Activated CD4-positive, alpha-beta memory T cell treated with anti-CD3 and anti-CD28 coated beads for 36 hours (primary cell): ENCODE measurements at regions of chr4 and their contacts with region 1.

Region 1: DNA sequence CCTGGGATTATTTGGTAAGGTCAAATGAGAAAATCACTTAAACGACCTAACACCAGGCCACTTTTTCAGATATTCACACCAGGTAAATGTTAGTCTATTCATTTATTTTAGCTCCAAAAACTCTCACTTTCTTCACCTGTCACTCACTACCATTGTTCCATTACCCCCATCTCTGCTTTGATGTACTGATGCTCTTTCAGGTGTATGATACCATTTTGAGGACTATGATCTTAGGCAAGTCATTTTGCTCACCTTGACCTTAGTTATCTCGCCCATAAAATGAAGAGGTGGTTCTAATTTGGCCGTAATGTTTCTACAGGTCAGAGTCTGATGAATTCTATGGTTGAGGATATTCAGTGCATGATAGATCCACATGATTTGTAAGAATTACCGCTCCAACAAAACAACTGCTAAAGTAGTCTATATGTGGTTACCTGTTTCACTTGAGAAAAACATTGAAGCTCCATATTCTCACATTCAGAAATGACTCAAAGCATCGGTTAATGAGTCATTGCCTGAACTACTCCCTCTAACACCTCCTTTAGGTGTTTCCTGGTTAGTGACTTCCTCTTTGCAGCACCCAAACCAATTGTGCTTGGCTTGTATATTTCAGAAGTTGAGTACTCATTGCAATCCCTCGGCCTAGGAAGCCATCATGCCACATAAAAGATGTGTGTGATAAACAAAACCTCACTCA is 4.5 kb downstream of the DTHD1 start:
- DNase-seq: peak; percentile 75
- H3K4me3 Mint-ChIP-seq: peak overlapping the region; percentile 53
- H3K27ac Mint-ChIP-seq: peak overlapping the region; percentile 87
- H3K4me1 Mint-ChIP-seq: peaks cover 60% of the 10 kb centered on the region
- H3K27me3 Mint-ChIP-seq: no peaks in the 10 kb centered on the region

Region 2: GRCh38 chr4:36208893-36209473 is 76.9 kb before region 1 on chr4:
- CTCF ChIA-PET with region 1: no interaction called
- POLR2A ChIA-PET with region 1: interaction called, 5 read pairs
- intact Hi-C with region 1: loop called (anchors 1 kb)
- DNase-seq: peak; percentile 54
- H3K4me3 Mint-ChIP-seq: no peak overlapping the region
- H3K27ac Mint-ChIP-seq: peak overlapping the region; percentile 73
- H3K4me1 Mint-ChIP-seq: peaks cover 52% of the 10 kb centered on the region
- H3K27me3 Mint-ChIP-seq: no peaks in the 10 kb centered on the region

Region 3: DNA sequence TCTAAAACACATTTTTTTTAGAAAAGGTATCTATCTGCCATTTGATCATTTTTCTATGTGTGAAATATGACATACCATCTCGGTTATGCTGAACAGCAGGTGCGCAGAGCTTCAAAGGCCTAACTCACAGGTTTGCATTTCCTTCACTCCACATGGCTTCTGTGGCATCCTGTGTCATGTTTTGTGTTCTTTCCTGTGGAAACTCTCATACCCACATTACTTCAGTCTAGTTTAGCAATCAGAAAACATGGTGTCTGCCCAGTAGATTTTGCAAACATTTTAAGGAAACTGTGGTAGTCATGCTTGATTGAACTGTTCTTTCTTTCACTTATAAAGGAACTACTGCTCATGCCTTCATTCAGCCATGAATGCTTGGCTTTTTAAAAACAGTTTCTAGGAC is 30.4 kb before region 1 on chr4:
- CTCF ChIA-PET with region 1: interaction called, 3 read pairs
- POLR2A ChIA-PET with region 1: interaction called, 13 read pairs
- intact Hi-C with region 1: loop called (anchors 1 kb)
- DNase-seq: peak; percentile 75
- H3K4me3 Mint-ChIP-seq: peak overlapping the region; percentile 65
- H3K27ac Mint-ChIP-seq: peak overlapping the region; percentile 95
- H3K4me1 Mint-ChIP-seq: peaks cover 44% of the 10 kb centered on the region
- H3K27me3 Mint-ChIP-seq: no peaks in the 10 kb centered on the region

Region 4: GRCh38 chr4:36269101-36269500 is 16.8 kb before region 1 on chr4:
- CTCF ChIA-PET with region 1: interaction called, 6 read pairs
- POLR2A ChIA-PET with region 1: interaction called, 6 read pairs
- intact Hi-C with region 1: loop called (anchors 1 kb)
- DNase-seq: peak; percentile 56
- H3K4me3 Mint-ChIP-seq: no peak overlapping the region
- H3K27ac Mint-ChIP-seq: peak overlapping the region; percentile 53
- H3K4me1 Mint-ChIP-seq: peaks cover 48% of the 10 kb centered on the region
- H3K27me3 Mint-ChIP-seq: no peaks in the 10 kb centered on the region

Region 5: DNA sequence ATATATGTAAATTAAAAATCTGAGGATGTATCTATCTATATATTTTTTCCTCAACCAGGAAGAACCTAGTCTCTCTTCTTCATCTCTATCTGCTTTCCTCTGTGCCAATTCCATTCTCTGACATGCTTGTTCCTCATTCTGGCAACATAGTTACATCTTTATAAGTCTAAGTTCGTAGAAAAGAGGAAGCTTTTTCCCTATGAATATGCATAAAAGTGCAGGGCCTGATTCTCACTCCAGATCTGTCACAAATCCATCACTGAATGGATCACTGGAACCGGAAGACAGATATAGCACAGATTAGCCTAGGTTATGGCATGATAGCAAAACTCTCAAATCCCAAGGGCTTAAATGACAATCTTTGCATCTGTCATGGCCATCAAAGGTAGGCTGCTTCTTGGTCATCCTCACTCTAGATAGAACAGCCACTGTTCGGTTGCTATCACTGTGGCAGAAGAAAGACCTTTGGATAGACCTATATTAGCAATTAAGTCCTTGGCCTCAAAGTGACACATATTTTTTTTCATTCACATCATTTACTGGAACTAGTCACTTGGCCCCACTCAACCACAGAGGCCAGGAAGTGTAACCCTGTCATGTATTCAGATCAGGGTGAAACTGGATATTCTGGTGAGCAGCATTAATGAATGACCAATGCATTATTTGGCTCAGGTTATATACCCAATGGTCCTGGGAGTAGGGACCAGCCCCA is 17.6 kb after region 1 on chr4:
- CTCF ChIA-PET with region 1: no interaction called
- POLR2A ChIA-PET with region 1: no interaction called
- intact Hi-C with region 1: loop called (anchors 1 kb)
- DNase-seq: peak; percentile 33
- H3K4me3 Mint-ChIP-seq: no peak overlapping the region
- H3K27ac Mint-ChIP-seq: no peak overlapping the region
- H3K4me1 Mint-ChIP-seq: peaks cover 16% of the 10 kb centered on the region
- H3K27me3 Mint-ChIP-seq: peaks cover 1% of the 10 kb centered on the region

Region 6: GRCh38 chr4:36320117-36320896 is 34.4 kb after region 1 on chr4:
- CTCF ChIA-PET with region 1: interaction called, 7 read pairs
- POLR2A ChIA-PET with region 1: interaction called, 13 read pairs
- intact Hi-C with region 1: loop called (anchors 1 kb)
- DNase-seq: no peak
- H3K4me3 Mint-ChIP-seq: no peak overlapping the region
- H3K27ac Mint-ChIP-seq: peak overlapping the region; percentile 67
- H3K4me1 Mint-ChIP-seq: peaks cover 79% of the 10 kb centered on the region
- H3K27me3 Mint-ChIP-seq: no peaks in the 10 kb centered on the region

Region 7: DNA sequence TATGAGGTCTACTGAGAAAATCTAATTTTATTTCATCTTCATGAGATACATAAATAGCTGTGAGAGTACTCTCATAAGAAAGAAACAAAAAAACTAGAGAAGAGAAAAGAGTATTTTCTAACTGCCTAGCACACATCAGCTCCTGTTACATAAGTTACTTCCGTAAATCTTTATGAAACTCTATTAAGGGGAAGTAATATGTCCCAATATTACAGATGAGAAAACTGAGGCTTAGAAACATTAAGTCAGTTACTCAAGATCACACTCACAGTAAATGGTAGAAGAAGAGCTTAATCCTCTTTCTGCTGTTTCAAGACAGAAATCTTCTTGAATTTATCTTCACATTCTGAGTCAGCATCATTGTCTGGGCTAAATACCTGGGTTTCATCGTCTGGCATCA is 159.5 kb after region 1 on chr4:
- CTCF ChIA-PET with region 1: no interaction called
- POLR2A ChIA-PET with region 1: no interaction called
- intact Hi-C with region 1: no loop called
- DNase-seq: no peak
- H3K4me3 Mint-ChIP-seq: no peak overlapping the region
- H3K27ac Mint-ChIP-seq: no peak overlapping the region
- H3K4me1 Mint-ChIP-seq: no peaks in the 10 kb centered on the region
- H3K27me3 Mint-ChIP-seq: peaks cover 6% of the 10 kb centered on the region